H1 (cell line): ENCODE measurements at regions of chr10 and their contacts with region 1.

Region 1: GRCh38 chr10:90912174-90912573 is 8.7 kb downstream of the ANKRD1 start:
- DNase-seq: no peak
- H3K4me3 ChIP-seq: no peak overlapping the region
- H3K27ac ChIP-seq: no peak overlapping the region
- H3K4me1 ChIP-seq: no peaks in the 10 kb centered on the region
- H3K27me3 ChIP-seq: peaks cover 32 to 49% (median 47%) of the 10 kb centered on the region in 4 experiments
- CTCF ChIP-seq: no peak
- EP300 ChIP-seq: no peak
- POLR2A ChIP-seq: no peak
- RAD21 ChIP-seq: no peak

Region 2: GRCh38 chr10:90879062-90879461 is 33.1 kb before region 1 on chr10:
- CTCF ChIA-PET with region 1: interaction called, 14 read pairs
- POLR2A ChIA-PET with region 1: no interaction called
- DNase-seq: no peak
- H3K4me3 ChIP-seq: no peak overlapping the region
- H3K27ac ChIP-seq: no peak overlapping the region
- H3K4me1 ChIP-seq: no peaks in the 10 kb centered on the region
- H3K27me3 ChIP-seq: no peaks in the 10 kb centered on the region
- CTCF ChIP-seq: no peak
- EP300 ChIP-seq: no peak
- POLR2A ChIP-seq: no peak
- RAD21 ChIP-seq: no peak

Region 3: GRCh38 chr10:90947030-90947940 is 35.1 kb after region 1 on chr10:
- CTCF ChIA-PET with region 1: interaction called, 11 read pairs
- POLR2A ChIA-PET with region 1: no interaction called
- DNase-seq: no peak
- H3K4me3 ChIP-seq: no peak overlapping the region
- H3K27ac ChIP-seq: no peak overlapping the region
- H3K4me1 ChIP-seq: no peaks in the 10 kb centered on the region
- H3K27me3 ChIP-seq: peaks cover 0 to 10% (median 3%) of the 10 kb centered on the region in 4 experiments; a peak in 4 of 7 replicates
- CTCF ChIP-seq: no peak
- EP300 ChIP-seq: no peak
- POLR2A ChIP-seq: no peak
- RAD21 ChIP-seq: no peak

Region 4: DNA sequence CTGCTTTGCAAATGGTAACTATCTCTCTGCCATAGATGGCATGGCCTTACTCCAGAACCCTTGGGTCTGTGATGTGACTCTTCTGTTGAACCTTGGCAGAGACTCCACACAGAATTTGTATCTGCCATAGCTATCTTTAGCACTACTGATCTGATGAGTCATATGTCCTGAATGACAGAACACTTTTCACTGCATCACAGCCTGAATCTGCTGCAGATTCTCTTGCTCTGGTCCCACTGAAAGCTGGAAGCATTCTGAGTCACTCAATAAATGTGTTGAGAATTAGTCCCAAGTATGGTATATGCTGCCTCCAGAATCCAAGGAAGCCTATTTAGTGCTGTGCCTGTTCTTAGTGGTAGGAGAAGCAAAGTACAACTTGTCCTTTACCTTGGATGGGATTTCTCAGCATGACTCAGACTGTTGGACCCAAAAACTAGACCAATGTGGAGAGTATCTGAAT is 48.2 kb after region 1 on chr10:
- CTCF ChIA-PET with region 1: interaction called, 13 read pairs
- POLR2A ChIA-PET with region 1: no interaction called
- DNase-seq: no peak
- H3K4me3 ChIP-seq: no peak overlapping the region
- H3K27ac ChIP-seq: no peak overlapping the region
- H3K4me1 ChIP-seq: no peaks in the 10 kb centered on the region
- H3K27me3 ChIP-seq: peaks cover 0 to 11% (median 2%) of the 10 kb centered on the region in 4 experiments; a peak in 3 of 7 replicates
- CTCF ChIP-seq: no peak
- EP300 ChIP-seq: no peak
- POLR2A ChIP-seq: no peak
- RAD21 ChIP-seq: no peak

Region 5: GRCh38 chr10:90969947-90970684 is 57.9 kb after region 1 on chr10:
- CTCF ChIA-PET with region 1: interaction called, 40 read pairs
- POLR2A ChIA-PET with region 1: no interaction called
- DNase-seq: peak in 1 of 2 experiments; percentile 48
- H3K4me3 ChIP-seq: no peak overlapping the region
- H3K27ac ChIP-seq: no peak overlapping the region
- H3K4me1 ChIP-seq: no peaks in the 10 kb centered on the region
- H3K27me3 ChIP-seq: peaks cover 0 to 16% (median 7%) of the 10 kb centered on the region in 4 experiments; a peak in 5 of 7 replicates
- CTCF ChIP-seq: peak in 2 of 3 experiments; percentile 30; a peak in 3 of 4 replicates
- EP300 ChIP-seq: no peak
- POLR2A ChIP-seq: no peak
- RAD21 ChIP-seq: peak; percentile 47 to 59; a peak in 3 of 4 replicates

Region 6: GRCh38 chr10:90999512-91000172 is 87.5 kb after region 1 on chr10:
- CTCF ChIA-PET with region 1: interaction called, 19 read pairs
- POLR2A ChIA-PET with region 1: no interaction called
- DNase-seq: no peak
- H3K4me3 ChIP-seq: no peak overlapping the region
- H3K27ac ChIP-seq: no peak overlapping the region
- H3K4me1 ChIP-seq: no peaks in the 10 kb centered on the region
- H3K27me3 ChIP-seq: peaks cover 0 to 2% (median under 1%) of the 10 kb centered on the region in 4 experiments; a peak in 2 of 7 replicates
- CTCF ChIP-seq: no peak
- EP300 ChIP-seq: no peak
- POLR2A ChIP-seq: no peak
- RAD21 ChIP-seq: no peak

Region 7: GRCh38 chr10:91298224-91298871 is 386.2 kb after region 1 on chr10:
- CTCF ChIA-PET with region 1: interaction called, 10 read pairs
- POLR2A ChIA-PET with region 1: no interaction called
- DNase-seq: peak; percentile 78 to 93
- H3K4me3 ChIP-seq: peak overlapping the region; percentile 14 to 47 (median 26); a peak in 6 of 8 replicates
- H3K27ac ChIP-seq: no peak overlapping the region
- H3K4me1 ChIP-seq: peaks cover 0 to 3% (median under 1%) of the 10 kb centered on the region in 4 experiments; a peak in 1 of 7 replicates
- H3K27me3 ChIP-seq: no peaks in the 10 kb centered on the region
- CTCF ChIP-seq: peak; percentile 89 to 97 (median 95)
- EP300 ChIP-seq: no peak
- POLR2A ChIP-seq: peak in 1 of 2 experiments; percentile 38; a peak in 1 of 3 replicates
- RAD21 ChIP-seq: peak; percentile 97